Heart right ventricle (tissue), 16 donors: ENCODE measurements at regions of chr1 and their contacts with region 1.

Region 1: DNA sequence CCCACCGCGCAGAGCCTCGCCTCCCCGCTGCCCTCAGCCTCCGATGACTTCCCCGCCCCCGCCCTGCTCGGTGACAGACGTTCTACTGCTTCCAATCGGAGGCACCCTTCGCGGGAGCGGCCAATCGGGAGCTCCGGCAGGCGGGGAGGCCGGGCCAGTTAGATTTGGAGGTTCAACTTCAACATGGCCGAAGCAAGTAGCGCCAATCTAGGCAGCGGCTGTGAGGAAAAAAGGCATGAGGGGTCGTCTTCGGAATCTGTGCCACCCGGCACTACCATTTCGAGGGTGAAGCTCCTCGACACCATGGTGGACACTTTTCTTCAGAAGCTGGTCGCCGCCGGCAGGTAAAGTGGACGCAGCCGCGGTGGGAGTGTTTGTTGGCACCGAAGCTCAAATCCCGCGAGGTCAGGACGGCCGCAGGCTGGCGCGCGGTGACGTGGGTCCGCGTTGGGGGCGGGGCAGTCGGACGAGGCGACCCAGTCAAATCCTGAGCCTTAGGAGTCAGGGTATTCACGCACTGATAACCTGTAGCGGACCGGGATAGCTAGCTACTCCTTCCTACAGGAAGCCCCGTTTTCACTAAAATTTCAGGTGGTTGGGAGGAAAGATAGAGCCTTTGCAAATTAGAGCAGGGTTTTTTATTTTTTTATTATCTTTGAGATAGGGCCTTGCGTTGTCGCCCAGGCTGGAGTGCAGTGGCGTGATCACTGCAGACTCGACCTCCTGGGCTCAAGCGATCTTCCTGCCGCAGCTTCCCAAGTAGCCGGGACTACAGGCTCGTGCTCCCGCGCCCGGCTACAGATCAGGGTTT is at the start of gene PMF1:
- DNase-seq: peak; percentile 96 to 98
- ATAC-seq: peak; percentile 97 to 99 (median 99)
- H3K4me3 ChIP-seq: peak within 1 kb of the TSS; percentile 51 to 84 (median 66)
- H3K27ac ChIP-seq: peak within 1 kb of the TSS; percentile 85 to 99 (median 96)
- H3K4me1 ChIP-seq: peaks cover 3 to 44% (median 27%) of the 10 kb centered on the region in 9 donors
- H3K27me3 ChIP-seq: no peaks in the 10 kb centered on the region
- CTCF ChIP-seq: no peak
- total RNA-seq, gene PMF1: 55.9 to 87.3 (median 66.4) TPM

Region 2: DNA sequence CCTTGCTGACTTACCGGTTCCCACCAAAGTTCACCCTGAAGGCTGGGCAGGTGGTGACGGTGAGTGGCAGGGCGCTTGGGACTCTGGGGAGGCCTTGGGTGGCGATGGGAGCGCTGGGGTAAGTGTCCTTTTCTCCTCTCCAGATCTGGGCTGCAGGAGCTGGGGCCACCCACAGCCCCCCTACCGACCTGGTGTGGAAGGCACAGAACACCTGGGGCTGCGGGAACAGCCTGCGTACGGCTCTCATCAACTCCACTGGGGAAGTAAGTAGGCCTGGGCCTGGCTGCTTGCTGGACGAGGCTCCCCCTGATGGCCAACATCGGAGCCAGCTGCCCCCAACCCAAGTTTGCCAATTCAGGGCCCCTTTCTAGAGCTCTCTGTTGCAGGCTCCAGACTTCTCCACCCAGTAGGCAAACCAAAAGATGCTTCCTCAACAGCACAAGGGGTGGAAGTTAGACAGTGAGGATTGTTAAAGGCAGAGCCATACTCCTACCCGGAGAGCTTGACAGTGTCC is 76.0 kb before region 1 on chr1:
- intact Hi-C with region 1: loop called in 1 of 10 experiments (anchors 5 kb)
- DNase-seq: no peak
- ATAC-seq: no peak
- H3K4me3 ChIP-seq: no peak overlapping the region
- H3K27ac ChIP-seq: no peak overlapping the region
- H3K4me1 ChIP-seq: peaks cover 0 to 46% (median 5%) of the 10 kb centered on the region in 9 donors
- H3K27me3 ChIP-seq: no peaks in the 10 kb centered on the region
- CTCF ChIP-seq: peak in 1 of 9 donors; percentile 13